ENCODE measurements at regions of chr17 and their contacts with region 1.

Region 1: GRCh38 chr17:2041561-2042366 is at the start of gene OVCA2:
- DNase-seq: peak; percentile 90 to 99 (median 96)
- ATAC-seq: peak; percentile 90 to 94 (median 93)
- H3K4me3 ChIP-seq: peak within 1 kb of the TSS; percentile 69 to 84
- H3K4me3 Mint-ChIP-seq: peak within 1 kb of the TSS; percentile 82 to 95 (median 88)
- H3K27ac ChIP-seq: peak within 1 kb of the TSS; percentile 80
- H3K27ac Mint-ChIP-seq: peak within 1 kb of the TSS; percentile 89
- H3K4me1 ChIP-seq: peaks cover 9 to 20% of the 10 kb centered on the region in 2 experiments
- H3K4me1 Mint-ChIP-seq: peaks cover 17 to 26% (median 22%) of the 10 kb centered on the region in 3 donors
- H3K27me3 ChIP-seq: no peaks in the 10 kb centered on the region
- H3K27me3 Mint-ChIP-seq: no peaks in the 10 kb centered on the region
- total RNA-seq, gene OVCA2: 31.0 to 36.8 (median 31.8) TPM

Region 2: DNA sequence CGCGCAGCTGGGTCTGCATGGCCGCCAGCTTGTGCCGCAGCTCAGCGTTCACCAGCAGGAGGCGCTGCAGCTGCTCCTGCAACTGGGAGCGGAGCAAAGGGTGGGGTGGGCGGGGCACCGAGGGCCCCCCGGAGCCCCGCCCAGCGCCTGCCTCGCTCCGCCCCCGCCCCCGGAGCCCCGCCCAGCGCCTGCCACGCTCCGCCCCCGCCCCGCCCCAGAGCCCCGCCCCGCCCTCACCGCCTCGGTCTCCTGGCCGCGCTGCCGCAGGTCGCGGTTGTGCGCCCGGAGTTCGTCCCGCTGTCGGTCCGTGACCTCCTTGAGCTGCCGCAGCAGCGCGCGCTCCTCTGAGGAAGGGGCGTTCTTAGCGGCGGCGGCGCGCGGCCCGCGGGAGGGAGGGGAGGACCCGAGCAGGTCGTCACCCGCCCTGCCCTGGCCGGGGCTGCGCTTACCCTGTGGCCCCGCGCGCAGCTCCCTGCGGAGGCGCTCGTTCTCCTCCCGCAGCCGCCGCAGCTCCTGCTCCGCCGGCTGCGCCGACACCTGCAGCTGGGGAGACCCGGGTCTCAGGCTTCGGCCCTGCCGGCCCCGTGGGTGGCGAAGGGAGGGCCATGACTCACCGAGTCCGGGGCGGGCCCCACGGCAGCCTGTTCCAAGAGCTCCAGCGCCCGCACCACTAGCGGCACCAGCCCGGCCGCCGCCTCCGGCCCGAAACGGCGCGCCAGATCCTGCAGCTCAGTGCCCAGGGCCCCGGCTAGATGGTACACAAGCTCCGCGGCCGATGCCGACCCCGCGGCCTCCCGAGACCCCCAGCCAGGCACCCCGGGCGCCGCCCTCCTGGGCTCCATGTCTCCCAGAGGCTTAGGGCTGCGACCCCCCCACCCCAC is 392.6 kb before region 1 on chr17:
- CTCF ChIA-PET with region 1: no interaction called
- POLR2A ChIA-PET with region 1: interaction called in 1 of 2 experiments, 14 read pairs
- DNase-seq: peak; percentile 84 to 99 (median 92)
- ATAC-seq: peak; percentile 79 to 84 (median 80)
- H3K4me3 ChIP-seq: peak overlapping the region; percentile 40 to 41
- H3K4me3 Mint-ChIP-seq: peak overlapping the region; percentile 58 to 68 (median 65)
- H3K27ac ChIP-seq: peak overlapping the region; percentile 41
- H3K27ac Mint-ChIP-seq: no peak overlapping the region
- H3K4me1 ChIP-seq: peaks cover 11 to 41% of the 10 kb centered on the region in 2 experiments
- H3K4me1 Mint-ChIP-seq: peaks cover 18 to 34% (median 22%) of the 10 kb centered on the region in 3 donors
- H3K27me3 ChIP-seq: peaks cover 0 to 12% of the 10 kb centered on the region in 2 experiments
- H3K27me3 Mint-ChIP-seq: no peaks in the 10 kb centered on the region

Region 3: DNA sequence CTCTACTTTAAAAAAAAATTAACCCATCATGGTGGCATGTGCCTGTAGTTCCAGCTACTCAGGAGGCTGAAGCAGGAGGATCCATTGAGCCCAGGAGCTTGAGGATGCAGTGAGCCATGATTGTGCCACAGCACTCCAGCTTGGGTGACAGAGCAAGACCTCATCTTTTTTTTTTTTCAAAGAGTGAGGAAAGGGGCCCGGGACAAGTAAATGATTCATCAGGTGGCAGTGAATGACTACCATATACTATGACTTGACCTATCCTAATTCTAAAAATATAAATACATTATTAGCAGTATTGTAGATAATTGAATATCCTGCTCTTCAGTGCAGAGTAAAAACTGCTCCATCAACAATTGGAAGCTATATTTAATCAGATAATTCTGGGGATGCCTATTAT is 614.5 kb after region 1 on chr17:
- CTCF ChIA-PET with region 1: no interaction called
- POLR2A ChIA-PET with region 1: interaction called in 1 of 2 experiments, 14 read pairs
- DNase-seq: no peak
- ATAC-seq: no peak
- H3K4me3 ChIP-seq: no peak overlapping the region
- H3K4me3 Mint-ChIP-seq: no peak overlapping the region
- H3K27ac ChIP-seq: no peak overlapping the region
- H3K27ac Mint-ChIP-seq: no peak overlapping the region
- H3K4me1 ChIP-seq: peaks cover 0 to 17% of the 10 kb centered on the region in 2 experiments
- H3K4me1 Mint-ChIP-seq: peaks cover 58 to 65% (median 59%) of the 10 kb centered on the region in 3 donors
- H3K27me3 ChIP-seq: no peaks in the 10 kb centered on the region
- H3K27me3 Mint-ChIP-seq: no peaks in the 10 kb centered on the region